CD4-positive, alpha-beta memory T cell (primary cell): ENCODE measurements at regions of chr7 and their contacts with region 1.

Region 1: GRCh38 chr7:50266635-50267386 is 37.7 kb upstream of the IKZF1 start:
- DNase-seq: peak; percentile 79 to 89 (median 83)
- H3K4me3 ChIP-seq: peak overlapping the region in 1 of 2 donors; percentile 16
- H3K4me3 Mint-ChIP-seq: peak overlapping the region; percentile 61 to 93 (median 82)
- H3K27ac ChIP-seq: peak overlapping the region; percentile 49
- H3K27ac Mint-ChIP-seq: peak overlapping the region; percentile 91 to 97 (median 96)
- H3K4me1 ChIP-seq: peaks cover 100% of the 10 kb centered on the region
- H3K4me1 Mint-ChIP-seq: peaks cover 86 to 100% (median 93%) of the 10 kb centered on the region in 4 donors
- H3K27me3 ChIP-seq: no peaks in the 10 kb centered on the region
- H3K27me3 Mint-ChIP-seq: no peaks in the 10 kb centered on the region

Region 2: GRCh38 chr7:50142425-50143017 is 124.3 kb before region 1 on chr7:
- CTCF ChIA-PET with region 1: no interaction called
- POLR2A ChIA-PET with region 1: interaction called, 5 read pairs
- intact Hi-C with region 1: loop called (anchors 5 kb)
- DNase-seq: peak in 4 of 5 donors; percentile 57 to 63 (median 60)
- H3K4me3 ChIP-seq: no peak overlapping the region
- H3K4me3 Mint-ChIP-seq: peak overlapping the region; percentile 3 to 77 (median 49)
- H3K27ac ChIP-seq: no peak overlapping the region
- H3K27ac Mint-ChIP-seq: peak overlapping the region in 6 of 7 donors; percentile 0 to 93 (median 36)
- H3K4me1 ChIP-seq: peaks cover 26% of the 10 kb centered on the region
- H3K4me1 Mint-ChIP-seq: peaks cover 11 to 25% (median 18%) of the 10 kb centered on the region in 4 donors
- H3K27me3 ChIP-seq: no peaks in the 10 kb centered on the region
- H3K27me3 Mint-ChIP-seq: peaks cover 0 to 2% of the 10 kb centered on the region in 2 donors

Region 3: GRCh38 chr7:50246551-50246950 is 20.3 kb before region 1 on chr7:
- CTCF ChIA-PET with region 1: interaction called, 3 read pairs
- POLR2A ChIA-PET with region 1: interaction called, 38 read pairs
- intact Hi-C with region 1: loop called (anchors 2 kb)
- DNase-seq: no peak
- H3K4me3 ChIP-seq: no peak overlapping the region
- H3K4me3 Mint-ChIP-seq: peak overlapping the region in 1 of 8 donors; percentile 8
- H3K27ac ChIP-seq: no peak overlapping the region
- H3K27ac Mint-ChIP-seq: peak overlapping the region in 1 of 7 donors; percentile 30
- H3K4me1 ChIP-seq: peaks cover 7% of the 10 kb centered on the region
- H3K4me1 Mint-ChIP-seq: peaks cover 9 to 14% (median 12%) of the 10 kb centered on the region in 4 donors
- H3K27me3 ChIP-seq: no peaks in the 10 kb centered on the region
- H3K27me3 Mint-ChIP-seq: no peaks in the 10 kb centered on the region

Region 4: GRCh38 chr7:50293509-50294179 is 26.8 kb after region 1 on chr7:
- CTCF ChIA-PET with region 1: interaction called, 8 read pairs
- POLR2A ChIA-PET with region 1: interaction called, 575 read pairs
- intact Hi-C with region 1: no loop called
- DNase-seq: no peak
- H3K4me3 ChIP-seq: no peak overlapping the region
- H3K4me3 Mint-ChIP-seq: no peak overlapping the region
- H3K27ac ChIP-seq: no peak overlapping the region
- H3K27ac Mint-ChIP-seq: no peak overlapping the region
- H3K4me1 ChIP-seq: peaks cover 3% of the 10 kb centered on the region
- H3K4me1 Mint-ChIP-seq: peaks cover 18 to 44% (median 29%) of the 10 kb centered on the region in 4 donors
- H3K27me3 ChIP-seq: no peaks in the 10 kb centered on the region
- H3K27me3 Mint-ChIP-seq: no peaks in the 10 kb centered on the region

Region 5: GRCh38 chr7:50335795-50336754 is 69.3 kb after region 1 on chr7:
- CTCF ChIA-PET with region 1: interaction called, 4 read pairs
- POLR2A ChIA-PET with region 1: interaction called, 18 read pairs
- intact Hi-C with region 1: loop called (anchors 2 kb)
- DNase-seq: peak; percentile 66 to 95 (median 70)
- H3K4me3 ChIP-seq: peak overlapping the region in 1 of 2 donors; percentile 23
- H3K4me3 Mint-ChIP-seq: peak overlapping the region in 1 of 8 donors; percentile 53
- H3K27ac ChIP-seq: peak overlapping the region; percentile 96
- H3K27ac Mint-ChIP-seq: no peak overlapping the region
- H3K4me1 ChIP-seq: peaks cover 100% of the 10 kb centered on the region
- H3K4me1 Mint-ChIP-seq: peaks cover 0 to 63% (median 39%) of the 10 kb centered on the region in 4 donors
- H3K27me3 ChIP-seq: no peaks in the 10 kb centered on the region
- H3K27me3 Mint-ChIP-seq: no peaks in the 10 kb centered on the region

Region 6: DNA sequence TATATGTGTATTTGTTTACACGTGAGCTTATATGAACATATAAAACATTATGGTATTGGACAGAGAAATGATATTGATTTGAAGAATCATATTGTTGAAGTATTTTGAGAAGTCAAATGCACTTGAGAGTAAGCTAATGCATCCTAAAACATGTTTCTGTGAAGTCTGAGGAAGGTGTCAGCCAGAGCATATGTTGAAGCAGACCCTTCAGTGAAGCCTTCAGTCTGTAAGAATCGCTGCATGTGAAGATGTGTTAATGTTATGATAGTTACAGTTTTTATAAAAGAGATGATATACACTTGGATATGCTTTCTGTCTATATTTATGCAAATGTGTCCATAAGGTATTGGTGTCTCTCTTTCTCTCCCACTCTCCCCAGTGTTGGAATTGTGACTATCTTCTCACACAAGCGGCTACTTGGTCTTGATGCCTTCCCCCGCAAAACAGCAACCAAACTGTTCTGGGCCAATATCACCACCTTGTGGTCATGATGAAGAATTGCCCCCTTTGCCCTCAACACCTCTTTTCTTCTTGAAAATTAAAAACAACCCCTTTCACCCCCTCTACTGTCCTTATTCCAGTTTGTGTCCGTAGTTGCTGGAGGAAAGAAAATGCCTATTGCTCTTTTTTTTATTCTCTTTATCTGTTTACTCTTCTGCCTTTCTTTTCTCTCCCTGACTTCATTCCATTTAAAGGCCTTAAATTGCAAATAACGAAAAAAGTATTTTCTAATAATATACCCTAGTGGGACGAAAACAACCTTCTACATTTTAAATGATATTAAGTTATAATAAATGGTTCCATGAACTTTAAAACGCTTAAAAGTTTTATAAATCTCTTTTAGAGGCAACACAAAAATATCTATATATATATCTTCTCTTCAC is 102.6 kb after region 1 on chr7:
- CTCF ChIA-PET with region 1: interaction called, 47 read pairs
- POLR2A ChIA-PET with region 1: interaction called, 188 read pairs
- intact Hi-C with region 1: loop called (anchors 1 kb)
- DNase-seq: peak; percentile 70 to 81 (median 79)
- H3K4me3 ChIP-seq: no peak overlapping the region
- H3K4me3 Mint-ChIP-seq: peak overlapping the region; percentile 44 to 84 (median 67)
- H3K27ac ChIP-seq: peak overlapping the region; percentile 57
- H3K27ac Mint-ChIP-seq: peak overlapping the region in 6 of 7 donors; percentile 76 to 98 (median 92)
- H3K4me1 ChIP-seq: peaks cover 100% of the 10 kb centered on the region
- H3K4me1 Mint-ChIP-seq: peaks cover 78 to 97% (median 93%) of the 10 kb centered on the region in 4 donors
- H3K27me3 ChIP-seq: no peaks in the 10 kb centered on the region
- H3K27me3 Mint-ChIP-seq: no peaks in the 10 kb centered on the region